Activated B cell treated with CpG ODN at 0.5 μM for 24 hours (primary cell): ENCODE measurements at regions of chr2 and their contacts with region 1.

Region 1: DNA sequence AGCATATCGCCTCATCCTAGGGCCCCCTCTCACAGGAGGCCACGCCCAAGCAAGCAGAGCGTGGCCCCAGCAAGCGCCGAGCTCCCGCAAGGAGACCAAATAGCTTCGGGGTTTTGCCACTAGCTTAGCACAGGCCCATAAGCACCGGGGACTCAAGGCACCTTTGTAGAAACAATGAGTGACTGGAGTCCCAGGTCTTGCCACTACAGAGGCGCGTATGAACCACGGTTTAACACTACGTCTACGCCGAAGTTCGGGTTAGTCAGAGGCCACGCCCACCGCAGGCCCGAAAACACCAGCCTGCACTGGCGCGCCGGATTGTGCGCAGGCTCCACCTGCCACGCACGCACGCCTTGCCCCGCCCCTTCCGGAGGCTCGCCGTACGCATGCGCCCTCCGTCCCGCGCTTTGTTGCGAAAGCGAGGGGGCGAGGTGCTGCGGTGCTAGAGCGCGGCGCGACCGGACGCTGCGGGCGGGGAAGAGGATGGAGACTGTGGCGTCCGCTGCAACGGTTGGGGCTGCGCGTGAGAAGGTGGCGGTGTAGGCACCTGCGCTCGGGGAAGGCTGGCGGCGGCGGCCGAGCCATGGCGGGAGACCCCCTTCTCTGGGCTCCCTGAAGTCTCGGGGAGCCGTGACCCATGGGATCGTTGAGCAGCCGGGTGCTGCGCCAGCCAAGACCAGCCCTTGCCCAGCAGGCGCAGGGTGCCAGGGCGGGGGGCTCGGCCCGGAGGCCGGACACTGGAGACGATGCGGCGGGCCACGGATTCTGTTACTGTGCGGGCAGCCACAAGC is at the start of gene GMCL1:
- DNase-seq: peak; percentile 99
- ATAC-seq: peak; percentile 95
- H3K4me3 Mint-ChIP-seq: peak within 1 kb of the TSS; percentile 94
- H3K27ac Mint-ChIP-seq: peak within 1 kb of the TSS; percentile 96
- H3K4me1 Mint-ChIP-seq: peaks cover 29% of the 10 kb centered on the region
- H3K27me3 Mint-ChIP-seq: no peaks in the 10 kb centered on the region
- CTCF ChIP-seq: no peak
- total RNA-seq, gene GMCL1: 8.0 and 13.0 TPM in 2 replicates

Region 2: DNA sequence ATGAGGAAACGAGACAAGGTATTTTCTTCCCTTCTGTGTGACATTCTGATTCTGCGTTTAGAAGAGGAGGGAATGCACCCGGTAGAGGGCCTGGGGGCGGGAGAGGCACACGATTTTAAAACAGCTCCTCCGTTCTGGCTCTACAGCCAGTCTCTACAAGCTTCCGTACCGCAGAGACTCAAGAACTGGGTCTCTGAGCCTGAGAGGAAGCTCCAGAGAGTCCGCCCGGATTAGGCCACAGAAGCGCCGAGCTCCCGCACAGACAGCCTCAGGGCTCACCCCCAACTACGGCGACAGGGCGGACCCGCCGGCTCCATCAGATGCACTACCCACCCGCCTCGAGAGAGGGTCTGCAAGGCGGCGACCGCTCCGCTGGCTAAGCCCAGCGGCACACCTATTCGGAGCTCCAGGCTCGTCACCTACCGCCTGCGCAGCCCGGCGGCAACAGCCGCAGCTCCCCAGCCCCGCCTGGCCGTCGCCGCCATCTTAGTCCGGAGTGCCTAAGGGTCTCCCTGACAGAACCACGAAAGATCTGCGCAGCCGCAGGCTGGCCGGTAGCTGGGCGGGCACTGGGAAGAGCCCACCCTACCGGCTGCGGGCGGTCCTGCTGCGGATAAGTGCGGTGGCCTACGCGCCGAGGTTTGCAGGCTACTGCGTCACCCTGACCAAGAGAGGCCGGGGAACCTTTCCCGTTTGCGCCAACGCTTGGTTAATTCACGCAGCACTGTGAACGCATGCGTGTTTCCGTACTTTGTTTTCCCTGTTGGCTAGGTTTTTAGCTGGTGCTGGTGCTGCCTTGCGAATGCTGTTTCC is 392.3 kb before region 1 on chr2 and contains the start of gene NFU1:
- CTCF ChIA-PET with region 1: no interaction called
- POLR2A ChIA-PET with region 1: no interaction called
- intact Hi-C with region 1: loop called (anchors 1 kb)
- DNase-seq: peak; percentile 85
- ATAC-seq: peak; percentile 95
- H3K4me3 Mint-ChIP-seq: peak within 1 kb of the TSS; percentile 96
- H3K27ac Mint-ChIP-seq: peak within 1 kb of the TSS; percentile 93
- H3K4me1 Mint-ChIP-seq: peaks cover 34% of the 10 kb centered on the region
- H3K27me3 Mint-ChIP-seq: no peaks in the 10 kb centered on the region
- CTCF ChIP-seq: no peak
- total RNA-seq, gene NFU1: 24.3 and 31.1 TPM in 2 replicates

Region 3: GRCh38 chr2:69863298-69863697 is 33.8 kb after region 1 on chr2:
- CTCF ChIA-PET with region 1: no interaction called
- POLR2A ChIA-PET with region 1: no interaction called
- intact Hi-C with region 1: no loop called
- DNase-seq: no peak
- ATAC-seq: no peak
- H3K4me3 Mint-ChIP-seq: no peak overlapping the region
- H3K27ac Mint-ChIP-seq: no peak overlapping the region
- H3K4me1 Mint-ChIP-seq: no peaks in the 10 kb centered on the region
- H3K27me3 Mint-ChIP-seq: no peaks in the 10 kb centered on the region
- CTCF ChIP-seq: no peak

Region 4: DNA sequence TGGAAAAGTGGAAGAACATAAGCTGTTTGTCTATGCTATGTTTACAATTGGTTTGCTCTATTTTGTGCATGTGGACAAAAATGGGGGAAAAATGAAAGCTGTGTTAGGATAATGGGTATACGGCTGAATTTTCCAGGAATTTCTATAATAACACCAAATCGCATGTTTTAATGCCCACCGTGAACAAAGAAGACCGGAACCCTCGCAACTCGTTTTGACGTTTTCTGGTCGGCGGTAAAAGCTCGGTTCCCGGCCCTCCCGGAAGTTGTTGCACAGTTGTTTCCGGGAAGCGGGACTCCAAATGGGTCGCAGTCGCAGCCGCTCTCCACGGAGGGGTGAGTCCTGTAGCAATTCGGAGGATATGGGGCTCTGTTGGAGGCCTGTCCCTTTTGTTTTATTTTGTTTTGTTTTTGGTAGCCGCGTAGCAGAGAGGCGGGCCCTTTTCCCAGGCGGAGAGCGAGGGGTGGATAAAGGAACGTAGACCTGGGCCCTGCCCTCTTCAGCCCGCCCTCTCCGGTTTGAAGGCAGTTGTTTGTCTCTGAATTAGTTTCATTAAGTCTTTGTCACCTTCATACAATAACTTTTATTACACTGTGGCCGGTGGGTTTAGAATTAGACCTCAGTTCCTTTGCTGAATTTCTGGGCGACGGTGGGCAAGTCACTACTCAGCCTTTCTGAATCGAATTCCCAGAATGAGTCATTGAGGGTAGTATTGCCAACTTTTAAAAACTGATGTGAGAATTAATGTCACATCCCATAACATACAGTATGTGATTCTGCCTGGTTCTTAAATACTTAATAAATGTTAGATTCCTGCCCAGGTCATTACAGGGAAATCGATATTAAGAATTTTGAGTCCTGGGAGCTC is 64.5 kb after region 1 on chr2 and contains the start of gene SNRNP27:
- CTCF ChIA-PET with region 1: no interaction called
- POLR2A ChIA-PET with region 1: interaction called, 12 read pairs
- intact Hi-C with region 1: loop called (anchors 5 kb)
- DNase-seq: peak; percentile 69
- ATAC-seq: peak; percentile 88
- H3K4me3 Mint-ChIP-seq: peak within 1 kb of the TSS; percentile 100
- H3K27ac Mint-ChIP-seq: peak within 1 kb of the TSS; percentile 98
- H3K4me1 Mint-ChIP-seq: peaks cover 43% of the 10 kb centered on the region
- H3K27me3 Mint-ChIP-seq: no peaks in the 10 kb centered on the region
- CTCF ChIP-seq: no peak
- total RNA-seq, gene SNRNP27: 43.0 and 49.1 TPM in 2 replicates